ENCODE measurements at regions of chr12 and their contacts with region 1.

Region 1: DNA sequence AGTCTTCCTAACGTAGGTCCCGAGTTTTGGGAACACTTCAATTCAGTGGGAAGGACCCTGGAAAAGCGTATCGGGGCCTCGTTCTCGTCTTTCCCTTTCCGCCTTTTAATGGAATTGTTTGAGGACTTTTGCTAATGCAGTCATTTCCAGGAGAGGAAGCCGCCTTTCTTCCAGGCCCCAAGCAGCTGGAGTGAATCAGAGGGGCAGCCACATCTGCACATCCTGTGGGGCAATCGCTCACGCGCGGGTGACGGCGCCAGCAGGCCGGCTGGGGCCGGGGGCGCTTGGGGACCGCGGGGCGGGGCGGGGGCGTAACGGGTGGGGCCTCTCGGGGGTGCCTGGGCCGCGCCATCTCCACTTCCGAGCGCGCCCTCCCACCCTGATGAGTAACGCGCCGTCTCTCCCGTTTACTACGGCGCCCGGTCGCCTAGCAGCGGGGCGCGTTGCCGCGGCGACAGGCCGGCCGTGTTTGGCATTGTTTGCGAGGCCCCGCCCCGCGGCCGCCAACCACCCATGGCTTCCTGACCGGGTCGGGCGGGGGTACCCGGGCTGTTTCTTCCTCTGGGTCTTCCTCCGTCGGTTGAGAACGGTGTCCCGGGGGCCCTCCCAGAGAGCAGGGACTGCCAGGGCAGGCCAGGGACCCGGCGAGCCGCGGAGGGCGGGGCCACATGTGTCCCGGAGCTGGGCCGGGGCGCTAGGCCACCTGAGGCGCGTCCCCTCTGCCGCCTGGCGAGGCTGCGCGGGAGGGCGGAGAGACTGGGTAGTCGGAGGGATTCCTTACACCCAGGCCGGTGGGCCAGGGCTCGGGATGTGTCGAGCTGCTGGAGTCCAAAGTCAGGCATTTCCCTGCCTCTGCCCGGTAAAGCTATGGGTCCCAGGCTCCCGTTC is 2.3 kb downstream of the GSG1 start:
- DNase-seq: peak; percentile 91 to 95 (median 94)
- ATAC-seq: peak; percentile 55 to 93 (median 84)
- H3K4me3 ChIP-seq: peak overlapping the region; percentile 37 to 70 (median 58)
- H3K27ac ChIP-seq: peak overlapping the region; percentile 85 to 98 (median 92)
- H3K4me1 ChIP-seq: peaks cover 7 to 62% (median 43%) of the 10 kb centered on the region in 12 donors
- H3K27me3 ChIP-seq: no peaks in the 10 kb centered on the region
- CTCF ChIP-seq: peak in 1 of 12 donors; percentile 9
- POLR2A ChIP-seq: peak in 1 of 2 donors; percentile 33

Region 2: DNA sequence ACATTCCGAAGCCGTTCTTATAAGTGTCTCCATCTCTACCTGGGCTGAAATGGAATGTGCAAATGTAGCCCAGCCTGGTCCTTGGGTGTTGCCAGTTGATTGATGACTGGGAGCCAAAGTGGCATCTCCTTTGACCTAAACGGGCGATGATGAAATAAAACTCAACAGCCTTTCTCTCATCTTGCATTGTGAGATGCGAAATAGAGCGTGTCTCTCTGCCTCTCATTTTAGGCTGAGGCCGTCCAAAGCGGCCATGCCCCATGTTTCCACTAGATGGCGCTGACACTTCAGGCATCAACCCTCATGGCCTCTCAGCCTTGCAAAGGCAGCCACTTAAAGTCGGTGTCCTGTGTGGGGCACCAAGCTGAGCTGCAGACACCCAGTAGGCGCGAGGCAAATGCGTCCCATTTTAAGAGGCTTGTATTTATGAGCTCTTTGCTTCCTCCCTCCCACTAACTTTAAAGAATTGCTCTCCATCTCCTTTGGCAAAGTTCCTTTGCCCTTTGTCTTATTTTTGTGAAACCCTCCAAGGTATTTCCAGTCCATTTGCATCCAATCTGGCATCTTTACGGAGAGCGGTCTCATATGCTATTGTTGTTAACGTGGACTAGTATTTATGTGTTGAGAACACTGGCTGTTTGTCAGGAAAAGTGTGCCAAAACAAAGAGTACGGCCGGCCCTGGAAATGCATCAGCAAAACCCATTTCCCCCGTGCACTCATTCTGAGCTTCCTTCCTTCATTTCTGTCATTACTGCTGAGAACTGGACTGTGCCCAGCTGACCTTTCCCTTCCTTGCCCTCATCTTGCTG is 184.8 kb before region 1 on chr12:
- intact Hi-C with region 1: loop called in 4 of 10 experiments (anchors 5 to 10 kb)
- DNase-seq: peak; percentile 75 to 88 (median 84)
- ATAC-seq: peak; percentile 86 to 98 (median 96)
- H3K4me3 ChIP-seq: peak overlapping the region in 4 of 12 donors; percentile 10 to 23 (median 16)
- H3K27ac ChIP-seq: peak overlapping the region in 6 of 12 donors; percentile 5 to 46 (median 34)
- H3K4me1 ChIP-seq: peaks cover 0 to 14% (median 7%) of the 10 kb centered on the region in 12 donors
- H3K27me3 ChIP-seq: no peaks in the 10 kb centered on the region
- CTCF ChIP-seq: peak; percentile 96 to 99 (median 98)
- POLR2A ChIP-seq: no peak

Region 3: GRCh38 chr12:13023811-13024530 is 77.2 kb before region 1 on chr12:
- intact Hi-C with region 1: loop called in 1 of 10 experiments (anchors 5 kb)
- DNase-seq: peak in 1 of 5 donors; percentile 31
- ATAC-seq: peak; percentile 58 to 86 (median 68)
- H3K4me3 ChIP-seq: no peak overlapping the region
- H3K27ac ChIP-seq: no peak overlapping the region
- H3K4me1 ChIP-seq: peaks cover 0 to 14% (median 0%) of the 10 kb centered on the region in 12 donors
- H3K27me3 ChIP-seq: no peaks in the 10 kb centered on the region
- CTCF ChIP-seq: peak in 6 of 12 donors; percentile 19 to 59 (median 40)
- POLR2A ChIP-seq: no peak

Region 4: DNA sequence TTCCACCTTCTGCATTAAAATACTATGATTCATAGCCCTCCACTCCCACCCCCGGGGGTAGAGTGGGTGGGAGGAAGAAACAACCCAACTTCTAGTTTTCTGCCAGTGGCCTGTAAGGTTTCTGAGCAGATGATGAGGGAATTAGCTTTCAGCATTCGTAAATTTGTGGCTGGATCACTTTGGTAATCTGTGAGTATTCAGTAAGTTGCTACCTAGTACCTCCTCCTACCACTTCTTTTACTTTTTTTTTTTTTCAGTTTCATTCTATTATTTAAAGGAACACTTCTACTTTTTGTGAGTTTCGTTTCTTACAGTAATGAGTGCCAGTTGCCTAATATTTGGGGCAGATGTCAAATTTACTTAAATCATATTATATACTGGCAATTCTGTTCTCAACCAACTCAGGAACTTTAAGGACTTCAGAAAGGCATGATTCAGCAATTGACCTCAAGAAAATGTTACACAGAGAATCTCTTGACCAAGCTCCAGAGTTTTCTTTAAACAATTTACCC is 53.0 kb after region 1 on chr12:
- intact Hi-C with region 1: loop called in 6 of 10 experiments (anchors 1 to 5 kb)
- DNase-seq: no peak
- ATAC-seq: peak in 1 of 4 donors; percentile 66
- H3K4me3 ChIP-seq: no peak overlapping the region
- H3K27ac ChIP-seq: peak overlapping the region in 3 of 12 donors; percentile 3 to 63 (median 25)
- H3K4me1 ChIP-seq: peaks cover 0 to 47% (median 5%) of the 10 kb centered on the region in 12 donors
- H3K27me3 ChIP-seq: no peaks in the 10 kb centered on the region
- CTCF ChIP-seq: no peak
- POLR2A ChIP-seq: no peak

Region 5: GRCh38 chr12:13203034-13203922 is 102.2 kb after region 1 on chr12:
- intact Hi-C with region 1: loop called in 6 of 10 experiments (anchors 2 to 5 kb)
- DNase-seq: peak; percentile 57 to 75 (median 64)
- ATAC-seq: peak; percentile 24 to 58 (median 54)
- H3K4me3 ChIP-seq: peak overlapping the region in 9 of 12 donors; percentile 6 to 85 (median 20)
- H3K27ac ChIP-seq: peak overlapping the region; percentile 36 to 93 (median 68)
- H3K4me1 ChIP-seq: peaks cover 6 to 98% (median 80%) of the 10 kb centered on the region in 12 donors
- H3K27me3 ChIP-seq: no peaks in the 10 kb centered on the region
- CTCF ChIP-seq: peak in 9 of 12 donors; percentile 14 to 62 (median 37)
- POLR2A ChIP-seq: no peak

Measured in heart left ventricle (tissue), 16 donors.